ENCODE measurements at regions of chr1 and their contacts with region 1.

Region 1: DNA sequence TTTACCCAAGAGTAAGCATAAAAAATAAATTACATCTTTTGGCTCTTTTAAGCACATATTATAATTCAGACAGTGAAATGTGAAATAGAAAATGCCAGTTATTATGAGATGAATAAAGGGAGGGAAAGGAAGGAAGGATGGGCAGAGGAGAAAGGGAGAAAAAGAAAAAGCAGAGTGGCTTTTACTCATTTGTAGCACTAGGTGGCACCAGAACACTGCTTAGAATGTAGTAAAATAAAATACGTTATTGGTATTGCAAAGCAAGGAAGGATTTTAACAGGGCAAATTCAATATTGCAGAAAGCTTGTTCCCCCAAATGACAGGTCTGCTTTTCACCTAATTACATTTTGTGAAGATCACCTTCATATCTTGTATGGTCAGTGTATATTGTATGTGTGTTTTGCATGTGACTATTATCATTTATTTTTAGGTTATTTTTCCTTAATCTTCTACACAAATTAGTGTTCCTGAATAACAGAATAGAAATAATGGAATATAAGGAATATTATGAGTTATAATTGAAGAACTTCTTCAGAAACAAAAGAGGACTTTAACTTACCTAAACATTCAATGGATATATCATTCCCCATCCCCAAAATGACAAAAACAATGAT is 9.1 kb upstream of the PCNX2 start:
- DNase-seq: peak in 1 of 4 donors; percentile 22
- ATAC-seq: peak; percentile 64
- H3K4me3 ChIP-seq: no peak overlapping the region
- H3K27ac ChIP-seq: no peak overlapping the region
- H3K4me1 ChIP-seq: no peaks in the 10 kb centered on the region
- H3K27me3 ChIP-seq: no peaks in the 10 kb centered on the region
- CTCF ChIP-seq: peak; percentile 59 to 92 (median 86)
- POLR2A ChIP-seq: no peak

Region 2: GRCh38 chr1:233355841-233356704 is 51.5 kb after region 1 on chr1:
- intact Hi-C with region 1: no loop called
- DNase-seq: no peak
- ATAC-seq: no peak
- H3K4me3 ChIP-seq: no peak overlapping the region
- H3K27ac ChIP-seq: peak overlapping the region in 1 of 4 donors; percentile 29
- H3K4me1 ChIP-seq: peaks cover 58% of the 10 kb centered on the region
- H3K27me3 ChIP-seq: no peaks in the 10 kb centered on the region
- CTCF ChIP-seq: no peak
- POLR2A ChIP-seq: no peak

Region 3: GRCh38 chr1:233790662-233791375 is 486.2 kb after region 1 on chr1:
- intact Hi-C with region 1: loop called (anchors 10 kb)
- DNase-seq: peak; percentile 18 to 54 (median 36)
- ATAC-seq: peak; percentile 65
- H3K4me3 ChIP-seq: no peak overlapping the region
- H3K27ac ChIP-seq: no peak overlapping the region
- H3K4me1 ChIP-seq: no peaks in the 10 kb centered on the region
- H3K27me3 ChIP-seq: no peaks in the 10 kb centered on the region
- CTCF ChIP-seq: peak; percentile 76 to 92 (median 86)
- POLR2A ChIP-seq: no peak

Region 4: DNA sequence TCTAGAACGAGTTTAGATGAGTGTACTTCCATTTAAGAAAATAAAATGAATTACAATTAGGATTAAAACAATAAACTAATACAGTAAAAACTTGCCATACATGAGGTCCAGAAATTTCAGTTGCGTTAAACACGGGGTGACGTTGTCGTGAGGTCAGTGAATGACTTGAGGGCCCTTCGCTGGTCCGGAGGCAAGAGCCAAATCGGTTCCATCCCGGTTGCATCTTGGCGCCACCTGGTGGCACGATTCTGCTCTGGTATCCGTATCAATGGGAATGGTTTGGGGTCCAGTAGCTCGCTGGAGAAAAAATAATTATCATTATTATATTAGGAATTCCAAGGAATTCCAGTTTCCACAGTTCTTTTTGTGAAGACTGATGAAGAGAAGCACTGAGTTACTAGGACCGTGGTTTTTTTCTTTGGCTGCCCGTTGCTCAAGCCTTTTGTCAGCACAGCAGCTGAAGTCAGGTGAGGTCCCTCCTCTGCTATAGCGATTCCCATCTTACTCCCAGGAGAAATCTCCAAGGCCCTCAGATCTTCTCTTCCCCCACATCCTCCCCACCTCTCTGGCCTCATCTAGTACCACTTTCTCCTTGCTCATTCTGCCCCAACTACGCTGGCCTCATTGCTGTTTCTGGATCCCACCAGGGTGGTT is 761.3 kb after region 1 on chr1:
- intact Hi-C with region 1: loop called (anchors 5 kb)
- DNase-seq: peak; percentile 78 to 89 (median 81)
- ATAC-seq: peak; percentile 55
- H3K4me3 ChIP-seq: no peak overlapping the region
- H3K27ac ChIP-seq: no peak overlapping the region
- H3K4me1 ChIP-seq: peaks cover 3% of the 10 kb centered on the region
- H3K27me3 ChIP-seq: no peaks in the 10 kb centered on the region
- CTCF ChIP-seq: peak; percentile 65 to 89 (median 73)
- POLR2A ChIP-seq: no peak